T-cell (primary cell): ENCODE measurements at regions of chr7 and their contacts with region 1.

Region 1: DNA sequence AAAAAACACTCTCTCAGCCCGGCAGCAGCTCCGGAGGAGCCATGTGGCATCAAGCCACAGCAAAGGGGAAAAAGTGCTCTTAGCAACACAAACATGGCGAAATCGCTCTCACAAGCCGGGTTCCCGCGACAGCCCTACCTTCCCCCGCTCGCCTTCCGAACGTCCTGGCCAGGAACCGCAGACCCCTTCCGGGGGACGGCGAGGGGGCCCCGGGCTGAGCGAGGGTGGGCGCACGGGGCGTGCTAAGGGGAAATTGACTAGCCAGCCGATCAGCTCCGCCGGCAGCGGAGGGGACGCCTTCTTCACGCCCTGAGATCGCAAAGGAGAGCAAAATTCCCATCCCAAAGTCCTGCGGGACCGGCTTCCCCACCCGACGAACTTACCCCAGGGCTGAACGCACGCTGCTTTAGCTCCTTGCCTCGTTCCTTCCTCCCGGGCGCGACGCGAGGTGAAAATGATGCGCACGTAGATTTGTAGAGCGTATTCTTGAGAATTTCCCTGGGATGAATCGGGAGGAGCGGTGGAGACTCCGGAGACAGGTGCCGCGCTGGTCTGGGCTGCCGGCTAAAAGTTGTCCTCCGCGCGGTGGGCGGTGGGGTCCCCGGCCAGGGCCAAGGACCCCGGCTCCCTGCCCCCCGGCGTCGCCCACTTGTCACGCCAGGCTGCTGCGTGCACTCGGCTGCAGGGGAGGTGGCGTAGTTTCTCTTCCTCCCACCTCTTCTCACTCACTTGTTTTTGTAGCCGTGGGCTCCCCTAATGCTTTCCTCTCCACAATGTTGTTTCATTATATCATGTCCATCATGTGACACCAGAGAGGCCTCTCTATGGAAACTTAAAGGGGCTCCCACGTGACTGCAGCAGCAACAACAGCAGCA is 220.1 kb upstream of the MKLN1 start:
- DNase-seq: peak; percentile 39 to 90 (median 72)
- ATAC-seq: peak; percentile 40 to 59 (median 56)
- H3K4me3 ChIP-seq: peak overlapping the region; percentile 98 to 99
- H3K4me3 Mint-ChIP-seq: peak overlapping the region; percentile 95 to 99 (median 98)
- H3K27ac ChIP-seq: peak overlapping the region; percentile 91
- H3K27ac Mint-ChIP-seq: peak overlapping the region; percentile 96 to 99
- H3K4me1 ChIP-seq: peaks cover 17 to 49% of the 10 kb centered on the region in 2 experiments
- H3K4me1 Mint-ChIP-seq: peaks cover 63 to 68% (median 68%) of the 10 kb centered on the region in 3 donors
- H3K27me3 ChIP-seq: no peaks in the 10 kb centered on the region
- H3K27me3 Mint-ChIP-seq: no peaks in the 10 kb centered on the region

Region 2: DNA sequence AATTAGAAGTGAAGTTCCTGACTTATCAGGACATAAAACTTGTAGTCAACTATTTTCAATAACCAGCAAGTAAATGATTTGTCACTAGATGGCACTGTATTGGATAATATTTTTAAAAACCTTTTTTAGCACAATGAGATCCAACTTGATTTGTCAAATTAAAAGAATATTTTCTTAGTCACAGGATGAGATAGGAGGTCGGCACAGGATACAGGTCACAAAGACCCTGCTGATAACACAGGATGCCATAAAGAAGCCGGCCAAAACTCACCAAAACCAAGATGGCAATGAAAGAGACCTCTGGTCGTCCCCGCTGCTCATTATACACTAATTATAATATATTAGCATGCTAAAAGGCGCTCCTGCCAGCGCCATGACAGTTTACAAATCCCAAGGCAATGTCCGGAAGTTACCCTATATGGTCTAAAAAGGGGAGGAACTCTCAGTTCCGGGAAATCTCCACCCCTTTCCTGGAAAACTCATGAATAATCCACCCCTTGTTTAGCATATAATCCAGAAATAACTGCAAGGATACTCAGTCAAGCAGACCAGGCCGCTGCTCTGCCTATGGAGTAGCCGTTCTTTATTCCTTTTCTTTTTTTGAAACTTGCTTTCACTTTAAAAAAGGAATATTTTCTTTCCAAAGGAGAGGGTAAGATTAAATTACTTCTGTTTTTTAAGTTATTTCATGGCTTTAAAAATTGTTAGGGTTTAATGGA is 35.6 kb before region 1 on chr7:
- CTCF ChIA-PET with region 1: interaction called in 1 of 2 experiments, 4 read pairs
- POLR2A ChIA-PET with region 1: interaction called in 1 of 2 experiments, 10 read pairs
- DNase-seq: no peak
- ATAC-seq: no peak
- H3K4me3 ChIP-seq: no peak overlapping the region
- H3K4me3 Mint-ChIP-seq: peak overlapping the region in 1 of 3 donors; percentile 62
- H3K27ac ChIP-seq: no peak overlapping the region
- H3K27ac Mint-ChIP-seq: peak overlapping the region; percentile 43 to 58
- H3K4me1 ChIP-seq: peaks cover 2 to 40% of the 10 kb centered on the region in 2 experiments
- H3K4me1 Mint-ChIP-seq: peaks cover 37 to 93% (median 91%) of the 10 kb centered on the region in 3 donors
- H3K27me3 ChIP-seq: no peaks in the 10 kb centered on the region
- H3K27me3 Mint-ChIP-seq: no peaks in the 10 kb centered on the region

Region 3: GRCh38 chr7:131090886-131091692 is 16.5 kb before region 1 on chr7:
- CTCF ChIA-PET with region 1: interaction called in 1 of 2 experiments, 5 read pairs
- POLR2A ChIA-PET with region 1: interaction called, 4 to 28 read pairs
- DNase-seq: no peak
- ATAC-seq: peak in 2 of 4 experiments; percentile 3 to 6
- H3K4me3 ChIP-seq: no peak overlapping the region
- H3K4me3 Mint-ChIP-seq: peak overlapping the region in 2 of 3 donors; percentile 13 to 60
- H3K27ac ChIP-seq: no peak overlapping the region
- H3K27ac Mint-ChIP-seq: peak overlapping the region; percentile 19 to 53
- H3K4me1 ChIP-seq: peaks cover 0 to 53% of the 10 kb centered on the region in 2 experiments
- H3K4me1 Mint-ChIP-seq: peaks cover 84 to 88% (median 87%) of the 10 kb centered on the region in 3 donors
- H3K27me3 ChIP-seq: no peaks in the 10 kb centered on the region
- H3K27me3 Mint-ChIP-seq: no peaks in the 10 kb centered on the region

Region 4: GRCh38 chr7:131188367-131189339 is 81.1 kb after region 1 on chr7:
- CTCF ChIA-PET with region 1: interaction called, 3 to 11 read pairs
- POLR2A ChIA-PET with region 1: interaction called, 3 to 16 read pairs
- DNase-seq: peak in 34 of 35 experiments; percentile 5 to 86 (median 32)
- ATAC-seq: peak; percentile 92 to 94 (median 92)
- H3K4me3 ChIP-seq: no peak overlapping the region
- H3K4me3 Mint-ChIP-seq: peak overlapping the region in 1 of 3 donors; percentile 37
- H3K27ac ChIP-seq: peak overlapping the region; percentile 82
- H3K27ac Mint-ChIP-seq: peak overlapping the region; percentile 79 to 87
- H3K4me1 ChIP-seq: peaks cover 0 to 27% of the 10 kb centered on the region in 2 experiments
- H3K4me1 Mint-ChIP-seq: peaks cover 27 to 49% (median 42%) of the 10 kb centered on the region in 3 donors
- H3K27me3 ChIP-seq: peaks cover 0 to 2% of the 10 kb centered on the region in 2 experiments
- H3K27me3 Mint-ChIP-seq: no peaks in the 10 kb centered on the region

Region 5: GRCh38 chr7:131231381-131232220 is 124.0 kb after region 1 on chr7:
- CTCF ChIA-PET with region 1: interaction called in 1 of 2 experiments, 5 read pairs
- POLR2A ChIA-PET with region 1: interaction called, 5 to 12 read pairs
- DNase-seq: peak; percentile 19 to 78 (median 66)
- ATAC-seq: peak; percentile 76 to 84 (median 77)
- H3K4me3 ChIP-seq: peak overlapping the region; percentile 33 to 51
- H3K4me3 Mint-ChIP-seq: peak overlapping the region; percentile 66 to 76 (median 74)
- H3K27ac ChIP-seq: peak overlapping the region; percentile 80
- H3K27ac Mint-ChIP-seq: peak overlapping the region; percentile 92 to 94
- H3K4me1 ChIP-seq: peaks cover 9 to 27% of the 10 kb centered on the region in 2 experiments
- H3K4me1 Mint-ChIP-seq: peaks cover 40 to 56% (median 44%) of the 10 kb centered on the region in 3 donors
- H3K27me3 ChIP-seq: no peaks in the 10 kb centered on the region
- H3K27me3 Mint-ChIP-seq: no peaks in the 10 kb centered on the region

Region 6: GRCh38 chr7:131312838-131313237 is 205.3 kb after region 1 on chr7:
- CTCF ChIA-PET with region 1: no interaction called
- POLR2A ChIA-PET with region 1: no interaction called
- DNase-seq: no peak
- ATAC-seq: no peak
- H3K4me3 ChIP-seq: no peak overlapping the region
- H3K4me3 Mint-ChIP-seq: no peak overlapping the region
- H3K27ac ChIP-seq: no peak overlapping the region
- H3K27ac Mint-ChIP-seq: no peak overlapping the region
- H3K4me1 ChIP-seq: no peaks in the 10 kb centered on the region
- H3K4me1 Mint-ChIP-seq: no peaks in the 10 kb centered on the region
- H3K27me3 ChIP-seq: peaks cover 0 to 10% of the 10 kb centered on the region in 2 experiments
- H3K27me3 Mint-ChIP-seq: no peaks in the 10 kb centered on the region